Activated naive CD4-positive, alpha-beta T cell treated with anti-CD3 and anti-CD28 coated beads for 36 hours (primary cell): ENCODE measurements at regions of chr1 and their contacts with region 1.

Region 1: GRCh38 chr1:245915406-245915805 is 591.7 kb downstream of the SMYD3 start:
- DNase-seq: no peak
- H3K4me3 Mint-ChIP-seq: no peak overlapping the region
- H3K27ac Mint-ChIP-seq: no peak overlapping the region
- H3K4me1 Mint-ChIP-seq: no peaks in the 10 kb centered on the region
- H3K27me3 Mint-ChIP-seq: no peaks in the 10 kb centered on the region

Region 2: GRCh38 chr1:245894843-245895242 is 20.6 kb before region 1 on chr1:
- CTCF ChIA-PET with region 1: interaction called, 15 read pairs
- intact Hi-C with region 1: no loop called
- DNase-seq: no peak
- H3K4me3 Mint-ChIP-seq: no peak overlapping the region
- H3K27ac Mint-ChIP-seq: no peak overlapping the region
- H3K4me1 Mint-ChIP-seq: no peaks in the 10 kb centered on the region
- H3K27me3 Mint-ChIP-seq: no peaks in the 10 kb centered on the region